ENCODE measurements at regions of chr2 and their contacts with region 1.

Region 1: GRCh38 chr2:179031731-179032408 is 18.1 kb downstream of the CCDC141 start:
- DNase-seq: peak in 8 of 9 donors; percentile 29 to 77 (median 67)
- ATAC-seq: peak; percentile 92
- H3K4me3 ChIP-seq: peak overlapping the region; percentile 40
- H3K4me3 Mint-ChIP-seq: peak overlapping the region; percentile 71 to 87 (median 84)
- H3K27ac ChIP-seq: peak overlapping the region; percentile 80
- H3K27ac Mint-ChIP-seq: peak overlapping the region; percentile 93 to 99 (median 98)
- H3K4me1 ChIP-seq: peaks cover 0 to 15% of the 10 kb centered on the region in 2 donors
- H3K4me1 Mint-ChIP-seq: peaks cover 13 to 76% (median 46%) of the 10 kb centered on the region in 7 donors
- H3K27me3 ChIP-seq: no peaks in the 10 kb centered on the region
- H3K27me3 Mint-ChIP-seq: no peaks in the 10 kb centered on the region

Region 2: DNA sequence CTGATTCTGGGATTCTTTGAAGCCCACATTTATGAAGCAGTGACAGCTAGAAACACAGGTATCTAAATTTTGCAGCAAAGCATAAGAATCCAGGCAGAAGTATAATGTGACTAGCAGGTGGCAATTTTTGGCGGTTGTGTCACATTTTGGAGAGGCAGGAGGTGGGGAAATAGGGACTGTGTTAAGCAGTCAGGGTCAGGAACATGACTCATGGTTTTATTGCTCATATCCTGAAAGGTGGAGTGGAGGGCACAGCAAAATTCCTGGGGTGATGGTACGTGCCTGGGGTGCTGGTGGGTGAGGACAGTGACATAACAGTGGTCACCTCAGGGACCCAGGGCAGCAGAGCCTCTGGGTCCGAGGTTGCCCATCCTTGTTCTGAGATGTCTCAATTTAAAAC is 161.2 kb before region 1 on chr2:
- CTCF ChIA-PET with region 1: no interaction called
- POLR2A ChIA-PET with region 1: no interaction called
- intact Hi-C with region 1: loop called in 1 of 2 experiments (anchors 1 kb)
- DNase-seq: no peak
- ATAC-seq: no peak
- H3K4me3 ChIP-seq: no peak overlapping the region
- H3K4me3 Mint-ChIP-seq: peak overlapping the region in 1 of 10 donors; percentile 26
- H3K27ac ChIP-seq: no peak overlapping the region
- H3K27ac Mint-ChIP-seq: peak overlapping the region in 1 of 9 donors; percentile 40
- H3K4me1 ChIP-seq: no peaks in the 10 kb centered on the region
- H3K4me1 Mint-ChIP-seq: peaks cover 0 to 25% (median 0%) of the 10 kb centered on the region in 7 donors
- H3K27me3 ChIP-seq: no peaks in the 10 kb centered on the region
- H3K27me3 Mint-ChIP-seq: no peaks in the 10 kb centered on the region

Region 3: DNA sequence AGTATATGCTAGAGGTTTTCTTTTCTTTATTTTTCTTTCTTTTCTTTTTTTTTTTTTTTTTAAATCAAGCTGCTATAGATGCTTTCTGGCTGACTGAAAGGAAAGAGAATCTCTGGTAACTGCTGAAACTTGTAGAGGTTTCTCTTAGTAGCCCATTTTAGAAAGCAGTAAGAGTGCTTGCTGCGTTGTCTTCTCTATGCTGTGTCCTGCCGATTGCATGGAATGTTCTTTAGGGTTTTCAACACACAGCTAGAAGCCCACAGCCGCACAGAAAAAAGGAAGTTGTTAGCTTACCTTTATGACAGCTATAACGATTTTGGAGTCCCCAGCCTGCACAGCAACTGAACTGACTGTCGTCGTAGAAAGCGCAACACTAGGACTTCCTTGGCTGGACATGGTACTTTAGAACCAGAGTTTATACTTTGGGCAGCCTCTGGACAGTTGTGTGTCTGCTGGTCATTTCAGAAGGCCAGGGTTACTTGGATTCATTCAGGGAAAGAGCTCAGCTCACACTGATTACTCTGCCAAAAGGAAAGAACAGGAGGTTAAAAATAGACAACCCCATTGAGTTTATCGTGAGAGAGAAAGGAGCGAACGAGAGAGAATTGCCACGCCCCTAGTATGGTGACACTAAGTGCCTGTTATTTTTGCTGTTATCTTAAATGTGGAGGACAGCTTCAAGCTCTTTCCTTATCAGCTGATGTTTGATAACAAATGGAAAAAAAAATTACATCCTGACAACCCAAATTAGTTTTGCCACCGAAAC is 17.9 kb after region 1 on chr2 and contains the start of gene CCDC141:
- CTCF ChIA-PET with region 1: interaction called, 5 read pairs
- POLR2A ChIA-PET with region 1: interaction called, 42 read pairs
- intact Hi-C with region 1: loop called (anchors 1 kb)
- DNase-seq: peak; percentile 7 to 57 (median 40)
- ATAC-seq: peak; percentile 78
- H3K4me3 ChIP-seq: peak within 1 kb of the TSS; percentile 56
- H3K4me3 Mint-ChIP-seq: peak within 1 kb of the TSS; percentile 79 to 97 (median 93)
- H3K27ac ChIP-seq: peak within 1 kb of the TSS; percentile 81
- H3K27ac Mint-ChIP-seq: peak within 1 kb of the TSS; percentile 89 to 99 (median 97)
- H3K4me1 ChIP-seq: peaks cover 4 to 36% of the 10 kb centered on the region in 2 donors
- H3K4me1 Mint-ChIP-seq: peaks cover 10 to 67% (median 52%) of the 10 kb centered on the region in 7 donors
- H3K27me3 ChIP-seq: no peaks in the 10 kb centered on the region
- H3K27me3 Mint-ChIP-seq: no peaks in the 10 kb centered on the region
- total RNA-seq, gene CCDC141: 11.6 to 39.2 (median 35.1) TPM

Region 4: GRCh38 chr2:179106676-179107428 is 75.0 kb after region 1 on chr2:
- CTCF ChIA-PET with region 1: no interaction called
- POLR2A ChIA-PET with region 1: no interaction called
- intact Hi-C with region 1: loop called in 1 of 2 experiments (anchors 5 kb)
- DNase-seq: no peak
- ATAC-seq: peak; percentile 36
- H3K4me3 ChIP-seq: no peak overlapping the region
- H3K4me3 Mint-ChIP-seq: peak overlapping the region in 4 of 10 donors; percentile 7 to 70 (median 50)
- H3K27ac ChIP-seq: no peak overlapping the region
- H3K27ac Mint-ChIP-seq: peak overlapping the region in 6 of 9 donors; percentile 25 to 87 (median 50)
- H3K4me1 ChIP-seq: peaks cover 0 to 18% of the 10 kb centered on the region in 2 donors
- H3K4me1 Mint-ChIP-seq: peaks cover 10 to 41% (median 26%) of the 10 kb centered on the region in 7 donors
- H3K27me3 ChIP-seq: no peaks in the 10 kb centered on the region
- H3K27me3 Mint-ChIP-seq: no peaks in the 10 kb centered on the region

Region 5: GRCh38 chr2:179264368-179265081 is 232.7 kb after region 1 on chr2 and contains the start of gene SESTD1:
- CTCF ChIA-PET with region 1: no interaction called
- POLR2A ChIA-PET with region 1: no interaction called
- intact Hi-C with region 1: loop called in 1 of 2 experiments (anchors 10 kb)
- DNase-seq: peak; percentile 11 to 75 (median 47)
- ATAC-seq: peak; percentile 81
- H3K4me3 ChIP-seq: peak within 1 kb of the TSS; percentile 49
- H3K4me3 Mint-ChIP-seq: peak within 1 kb of the TSS; percentile 77 to 92 (median 86)
- H3K27ac ChIP-seq: peak within 1 kb of the TSS; percentile 60
- H3K27ac Mint-ChIP-seq: peak within 1 kb of the TSS in 7 of 9 donors; percentile 10 to 78 (median 45)
- H3K4me1 ChIP-seq: peaks cover 0 to 5% of the 10 kb centered on the region in 2 donors
- H3K4me1 Mint-ChIP-seq: peaks cover 13 to 24% (median 19%) of the 10 kb centered on the region in 7 donors
- H3K27me3 ChIP-seq: no peaks in the 10 kb centered on the region
- H3K27me3 Mint-ChIP-seq: peaks cover 34 to 48% (median 38%) of the 10 kb centered on the region in 5 donors
- total RNA-seq, gene SESTD1: 6.1 to 23.2 (median 8.1) TPM